ENCODE measurements at regions of chr6 and their contacts with region 1.

Region 1: GRCh38 chr6:130697995-130698535 is 129.1 kb upstream of the SMLR1 start:
- DNase-seq: peak; percentile 27 to 84 (median 62)
- H3K4me3 ChIP-seq: peak overlapping the region in 1 of 4 donors; percentile 34
- H3K27ac ChIP-seq: no peak overlapping the region
- H3K4me1 ChIP-seq: peaks cover 0 to 12% of the 10 kb centered on the region in 2 donors
- H3K27me3 ChIP-seq: no peaks in the 10 kb centered on the region
- CTCF ChIP-seq: peak; percentile 51 to 91 (median 75)
- POLR2A ChIP-seq: no peak

Region 2: GRCh38 chr6:130037207-130037811 is 660.8 kb before region 1 on chr6:
- intact Hi-C with region 1: no loop called
- DNase-seq: no peak
- H3K4me3 ChIP-seq: no peak overlapping the region
- H3K27ac ChIP-seq: no peak overlapping the region
- H3K4me1 ChIP-seq: peaks cover 25 to 30% of the 10 kb centered on the region in 2 donors
- H3K27me3 ChIP-seq: no peaks in the 10 kb centered on the region
- CTCF ChIP-seq: peak; percentile 13 to 58 (median 42)
- POLR2A ChIP-seq: no peak

Region 3: GRCh38 chr6:130322673-130323268 is 375.3 kb before region 1 on chr6:
- intact Hi-C with region 1: loop called (anchors 5 kb)
- DNase-seq: peak; percentile 37 to 82 (median 57)
- H3K4me3 ChIP-seq: no peak overlapping the region
- H3K27ac ChIP-seq: no peak overlapping the region
- H3K4me1 ChIP-seq: no peaks in the 10 kb centered on the region
- H3K27me3 ChIP-seq: no peaks in the 10 kb centered on the region
- CTCF ChIP-seq: peak; percentile 74 to 92 (median 86)
- POLR2A ChIP-seq: no peak

Region 4: GRCh38 chr6:130365166-130366106 is 332.6 kb before region 1 on chr6 and contains the start of gene TMEM200A:
- intact Hi-C with region 1: loop called in 1 of 2 experiments (anchors 10 kb)
- DNase-seq: peak; percentile 68 to 82 (median 76)
- H3K4me3 ChIP-seq: peak within 1 kb of the TSS; percentile 36 to 82 (median 64)
- H3K27ac ChIP-seq: peak within 1 kb of the TSS in 3 of 5 donors; percentile 48 to 78 (median 74)
- H3K4me1 ChIP-seq: peaks cover 0 to 18% of the 10 kb centered on the region in 2 donors
- H3K27me3 ChIP-seq: no peaks in the 10 kb centered on the region
- CTCF ChIP-seq: peak; percentile 49 to 78 (median 74)
- POLR2A ChIP-seq: no peak
- total RNA-seq, gene TMEM200A: 21.6 to 87.7 (median 30.5) TPM

Measured in adrenal gland (tissue), 19 donors.